Caco-2 (cell line): ENCODE measurements at regions of chr14 and their contacts with region 1.

Region 1: GRCh38 chr14:63727774-63728728 is at the start of gene SGPP1:
- DNase-seq: peak; percentile 78 to 85
- H3K4me3 ChIP-seq: peak within 1 kb of the TSS; percentile 89
- H3K4me3 Mint-ChIP-seq: peak within 1 kb of the TSS; percentile 97
- H3K27ac Mint-ChIP-seq: peak within 1 kb of the TSS; percentile 95
- H3K4me1 ChIP-seq: peaks cover 6% of the 10 kb centered on the region
- H3K4me1 Mint-ChIP-seq: peaks cover 23% of the 10 kb centered on the region
- H3K27me3 ChIP-seq: no peaks in the 10 kb centered on the region
- H3K27me3 Mint-ChIP-seq: no peaks in the 10 kb centered on the region
- CTCF ChIP-seq: peak; percentile 46 to 55
- total RNA-seq, gene SGPP1: 15.2 and 16.9 TPM in 2 replicates

Region 2: GRCh38 chr14:63641473-63642228 is 86.4 kb before region 1 on chr14 and contains the start of gene WDR89:
- CTCF ChIA-PET with region 1: no interaction called
- POLR2A ChIA-PET with region 1: interaction called, 9 read pairs
- intact Hi-C with region 1: loop called (anchors 2 kb)
- DNase-seq: peak; percentile 97 to 99
- H3K4me3 ChIP-seq: peak within 1 kb of the TSS; percentile 67
- H3K4me3 Mint-ChIP-seq: peak within 1 kb of the TSS; percentile 88
- H3K27ac Mint-ChIP-seq: peak within 1 kb of the TSS; percentile 96
- H3K4me1 ChIP-seq: no peaks in the 10 kb centered on the region
- H3K4me1 Mint-ChIP-seq: no peaks in the 10 kb centered on the region
- H3K27me3 ChIP-seq: no peaks in the 10 kb centered on the region
- H3K27me3 Mint-ChIP-seq: no peaks in the 10 kb centered on the region
- CTCF ChIP-seq: peak; percentile 77 to 85
- total RNA-seq, gene WDR89: 14.4 and 16.6 TPM in 2 replicates

Region 3: DNA sequence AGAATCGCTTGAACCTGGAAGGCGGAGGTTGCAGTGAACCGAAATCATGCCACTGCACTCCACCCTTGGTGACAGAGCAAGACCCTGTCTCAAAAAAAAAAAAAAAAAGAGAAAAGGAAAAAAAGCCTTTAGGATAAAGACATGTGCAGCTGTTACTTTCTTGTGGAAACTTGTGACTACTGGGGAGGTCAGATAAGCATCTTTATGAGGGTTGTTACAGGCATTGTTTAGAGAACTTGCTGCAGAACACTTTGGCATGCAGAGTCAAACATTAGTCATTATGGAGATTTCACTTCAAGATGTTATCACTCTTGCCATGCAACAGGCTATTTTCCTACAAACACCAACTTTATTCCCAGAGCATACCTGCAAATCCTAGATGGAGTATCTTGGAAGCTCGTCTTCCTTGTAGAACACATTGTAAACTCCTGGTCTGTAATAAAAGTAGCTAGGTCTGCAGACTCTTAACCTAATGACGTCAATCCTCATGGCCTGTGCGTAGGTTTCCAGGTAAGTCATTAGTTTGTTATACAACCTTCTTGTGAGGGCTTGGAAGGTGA is 50.1 kb before region 1 on chr14:
- CTCF ChIA-PET with region 1: no interaction called
- POLR2A ChIA-PET with region 1: no interaction called
- intact Hi-C with region 1: loop called (anchors 5 kb)
- DNase-seq: peak in 1 of 2 experiments; percentile 61
- H3K4me3 ChIP-seq: no peak overlapping the region
- H3K4me3 Mint-ChIP-seq: peak overlapping the region; percentile 24
- H3K27ac Mint-ChIP-seq: peak overlapping the region; percentile 78
- H3K4me1 ChIP-seq: peaks cover 14% of the 10 kb centered on the region
- H3K4me1 Mint-ChIP-seq: peaks cover 7% of the 10 kb centered on the region
- H3K27me3 ChIP-seq: no peaks in the 10 kb centered on the region
- H3K27me3 Mint-ChIP-seq: no peaks in the 10 kb centered on the region
- CTCF ChIP-seq: no peak

Region 4: GRCh38 chr14:63759456-63759855 is 31.4 kb after region 1 on chr14:
- CTCF ChIA-PET with region 1: no interaction called
- POLR2A ChIA-PET with region 1: no interaction called
- intact Hi-C with region 1: loop called (anchors 1 kb)
- DNase-seq: no peak
- H3K4me3 ChIP-seq: no peak overlapping the region
- H3K4me3 Mint-ChIP-seq: no peak overlapping the region
- H3K27ac Mint-ChIP-seq: no peak overlapping the region
- H3K4me1 ChIP-seq: peaks cover 3% of the 10 kb centered on the region
- H3K4me1 Mint-ChIP-seq: peaks cover 7% of the 10 kb centered on the region
- H3K27me3 ChIP-seq: no peaks in the 10 kb centered on the region
- H3K27me3 Mint-ChIP-seq: no peaks in the 10 kb centered on the region
- CTCF ChIP-seq: no peak

Region 5: GRCh38 chr14:63770187-63770807 is 42.2 kb after region 1 on chr14:
- CTCF ChIA-PET with region 1: interaction called, 6 read pairs
- POLR2A ChIA-PET with region 1: no interaction called
- intact Hi-C with region 1: loop called (anchors 1 kb)
- DNase-seq: peak in 1 of 2 experiments; percentile 54
- H3K4me3 ChIP-seq: no peak overlapping the region
- H3K4me3 Mint-ChIP-seq: no peak overlapping the region
- H3K27ac Mint-ChIP-seq: no peak overlapping the region
- H3K4me1 ChIP-seq: peaks cover 4% of the 10 kb centered on the region; the same call in 1 of the 2 replicates
- H3K4me1 Mint-ChIP-seq: peaks cover 7% of the 10 kb centered on the region
- H3K27me3 ChIP-seq: no peaks in the 10 kb centered on the region
- H3K27me3 Mint-ChIP-seq: no peaks in the 10 kb centered on the region
- CTCF ChIP-seq: peak; percentile 59 to 69